Activated T-helper 1 cell treated with anti-CD3 and anti-CD28 coated beads, Interleukin-12 subunit alpha, Interleukin-12 subunit beta, Interleukin-2, Interleukin-4 antibody, amounts not matched to agents 30 ng/mL and 10 ng/mL and 1 ng/mL, durations not matched to agents 14 hours and 24 hours and 36 hours (primary cell): ENCODE measurements at regions of chr3 and their contacts with region 1.

Region 1: GRCh38 chr3:151918253-151919029 is 45.0 kb downstream of the SUCNR1 start:
- DNase-seq: no peak
- H3K4me3 Mint-ChIP-seq: no peak overlapping the region
- H3K27ac Mint-ChIP-seq: no peak overlapping the region
- H3K4me1 Mint-ChIP-seq: no peaks in the 10 kb centered on the region
- H3K27me3 Mint-ChIP-seq: peaks cover 5% of the 10 kb centered on the region

Region 2: DNA sequence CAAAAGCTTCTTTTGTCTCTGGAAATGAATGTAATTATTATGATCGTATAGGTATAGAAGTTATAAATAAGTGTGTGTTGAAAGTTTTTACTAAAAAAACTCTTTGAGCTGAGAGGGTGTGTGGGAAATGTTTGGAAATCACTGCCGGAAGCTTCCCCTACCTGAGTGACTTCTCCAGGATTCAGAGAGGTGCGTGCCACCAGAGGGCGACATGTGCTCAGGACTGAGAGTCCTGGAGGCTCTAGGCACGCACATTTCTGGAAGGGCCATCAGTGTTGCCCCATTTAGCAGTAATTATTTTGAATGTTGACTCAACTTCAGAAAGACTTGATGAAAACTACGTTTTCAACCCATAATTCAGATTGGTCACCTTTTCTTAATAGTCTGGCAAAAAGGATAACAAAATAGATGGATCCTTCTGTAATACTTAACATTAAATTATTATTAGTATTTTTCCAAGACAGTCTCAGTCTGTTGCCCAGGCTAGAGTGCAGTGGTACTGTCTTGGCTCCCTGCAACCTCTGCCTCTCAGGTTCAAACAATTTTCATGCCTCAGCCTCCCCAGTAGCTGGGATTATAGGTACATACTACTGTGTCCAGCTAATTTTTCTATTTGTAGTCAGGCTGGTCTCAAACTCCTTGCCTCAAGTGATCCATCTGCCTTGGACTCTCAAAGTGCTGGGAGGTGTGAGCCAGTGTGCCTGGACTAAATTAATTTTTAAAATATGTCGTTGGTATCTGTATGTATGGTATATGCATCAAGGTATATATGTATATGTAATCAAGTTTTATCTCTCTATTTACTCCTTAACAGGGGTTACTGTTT is 750.0 kb before region 1 on chr3:
- intact Hi-C with region 1: loop called (anchors 5 kb)
- DNase-seq: peak; percentile 66
- H3K4me3 Mint-ChIP-seq: no peak overlapping the region
- H3K27ac Mint-ChIP-seq: no peak overlapping the region
- H3K4me1 Mint-ChIP-seq: peaks cover 46% of the 10 kb centered on the region
- H3K27me3 Mint-ChIP-seq: peaks cover 3% of the 10 kb centered on the region

Region 3: GRCh38 chr3:151290673-151291072 is 627.8 kb before region 1 on chr3:
- intact Hi-C with region 1: loop called (anchors 5 kb)
- DNase-seq: no peak
- H3K4me3 Mint-ChIP-seq: no peak overlapping the region
- H3K27ac Mint-ChIP-seq: no peak overlapping the region
- H3K4me1 Mint-ChIP-seq: peaks cover 3% of the 10 kb centered on the region
- H3K27me3 Mint-ChIP-seq: peaks cover 14% of the 10 kb centered on the region

Region 4: GRCh38 chr3:151439652-151440129 is 478.8 kb before region 1 on chr3:
- intact Hi-C with region 1: loop called (anchors 1 kb)
- DNase-seq: no peak
- H3K4me3 Mint-ChIP-seq: no peak overlapping the region
- H3K27ac Mint-ChIP-seq: no peak overlapping the region
- H3K4me1 Mint-ChIP-seq: no peaks in the 10 kb centered on the region
- H3K27me3 Mint-ChIP-seq: peaks cover 3% of the 10 kb centered on the region

Region 5: DNA sequence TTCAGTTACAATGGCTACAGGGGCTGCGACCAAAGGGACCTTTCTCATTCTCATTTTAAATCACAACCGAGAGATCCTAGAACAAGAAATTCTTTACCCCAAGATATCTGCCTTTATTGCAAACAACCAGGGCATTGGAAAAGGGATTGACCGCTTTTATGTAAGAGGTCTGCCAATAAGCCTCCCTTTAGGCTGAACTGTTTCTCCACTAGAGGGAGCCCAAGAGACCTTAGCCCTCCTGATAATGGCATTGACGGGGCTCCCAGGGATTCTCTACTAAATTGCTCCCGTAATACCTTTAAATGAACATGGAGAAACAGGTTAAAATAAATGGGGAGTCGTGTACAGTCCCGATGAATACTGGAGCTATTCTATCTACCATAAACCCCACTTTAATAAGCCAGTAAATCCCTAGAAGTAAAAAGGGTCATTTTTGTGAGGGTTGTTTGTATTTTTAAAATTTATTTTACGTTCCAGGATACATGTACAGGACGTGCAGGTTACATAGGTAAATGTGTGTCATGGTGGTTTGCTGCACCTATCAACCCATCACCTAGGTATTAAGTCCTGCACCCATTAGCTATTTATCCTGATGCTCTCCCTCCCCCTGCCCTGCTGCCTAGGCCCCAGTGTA is 450.0 kb before region 1 on chr3:
- intact Hi-C with region 1: loop called (anchors 1 kb)
- DNase-seq: peak; percentile 6
- H3K4me3 Mint-ChIP-seq: no peak overlapping the region
- H3K27ac Mint-ChIP-seq: no peak overlapping the region
- H3K4me1 Mint-ChIP-seq: no peaks in the 10 kb centered on the region
- H3K27me3 Mint-ChIP-seq: peaks cover 9% of the 10 kb centered on the region